Right cardiac atrium (tissue), 5 donors: ENCODE measurements at regions of chr9 and their contacts with region 1.

Region 1: GRCh38 chr9:126490871-126491567 is 122.7 kb upstream of the LMX1B start:
- DNase-seq: peak in 2 of 3 donors; percentile 20 to 30
- ATAC-seq: no peak
- H3K4me3 ChIP-seq: no peak overlapping the region
- H3K27ac ChIP-seq: no peak overlapping the region
- H3K4me1 ChIP-seq: no peaks in the 10 kb centered on the region
- H3K27me3 ChIP-seq: no peaks in the 10 kb centered on the region

Region 2: DNA sequence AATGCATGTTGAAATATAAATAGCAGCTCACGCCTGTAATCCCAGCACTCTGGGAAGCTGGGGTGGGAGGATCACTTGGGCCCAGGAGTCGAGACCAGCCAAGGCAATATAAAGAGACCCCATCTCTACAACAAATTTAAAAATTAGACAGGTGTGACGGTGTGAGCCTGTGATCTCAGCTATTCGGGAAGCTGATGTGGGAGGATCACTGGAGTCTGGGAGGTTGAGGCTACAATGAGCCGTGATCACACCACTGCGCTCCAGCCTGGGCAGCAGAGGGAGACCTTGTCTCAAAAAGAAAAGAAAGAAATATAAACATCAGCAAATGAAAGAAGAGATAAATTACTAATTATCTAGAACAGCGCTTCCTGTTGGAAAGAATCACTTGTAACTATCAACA is 889.1 kb before region 1 on chr9:
- intact Hi-C with region 1: no loop called
- DNase-seq: no peak
- ATAC-seq: no peak
- H3K4me3 ChIP-seq: no peak overlapping the region
- H3K27ac ChIP-seq: no peak overlapping the region
- H3K4me1 ChIP-seq: peaks cover 1% of the 10 kb centered on the region
- H3K27me3 ChIP-seq: no peaks in the 10 kb centered on the region

Region 3: DNA sequence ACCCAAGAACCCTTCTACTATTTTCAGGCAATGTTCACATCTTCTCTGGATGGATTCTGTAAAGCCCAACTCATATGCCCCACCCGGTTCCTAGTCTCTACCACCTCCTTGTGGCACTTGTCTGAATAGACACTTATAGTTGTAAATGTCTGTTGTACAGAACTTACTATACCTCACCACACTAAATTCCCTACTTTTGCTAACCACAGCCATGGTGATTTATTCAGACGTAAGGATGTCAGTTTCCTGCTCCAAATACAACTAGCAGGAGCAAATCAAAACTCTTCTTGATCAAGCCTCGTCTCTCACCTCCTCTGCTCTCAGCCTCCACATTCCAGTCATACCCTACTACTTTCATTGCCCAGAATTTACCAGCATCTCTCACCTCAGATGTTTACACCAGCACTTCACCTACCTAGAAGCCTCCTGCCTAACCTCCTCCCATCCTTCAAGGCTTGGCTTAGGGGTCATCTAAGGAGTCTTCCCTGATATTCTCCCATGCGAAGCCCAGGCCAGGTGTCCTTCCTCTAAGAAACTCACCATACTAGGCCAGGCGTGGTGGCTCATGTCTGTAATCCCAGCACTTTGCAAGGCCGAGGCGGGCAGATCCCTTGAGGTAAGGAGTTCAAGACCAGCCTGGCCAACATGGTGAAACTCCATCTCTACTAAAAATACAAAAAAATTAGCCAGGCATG is 859.5 kb before region 1 on chr9:
- intact Hi-C with region 1: loop called in 1 of 4 experiments (anchors 10 kb)
- DNase-seq: peak in 1 of 3 donors; percentile 51
- ATAC-seq: peak; percentile 66 to 79
- H3K4me3 ChIP-seq: no peak overlapping the region
- H3K27ac ChIP-seq: no peak overlapping the region
- H3K4me1 ChIP-seq: peaks cover 3% of the 10 kb centered on the region
- H3K27me3 ChIP-seq: no peaks in the 10 kb centered on the region

Region 4: GRCh38 chr9:126301985-126302603 is 188.9 kb before region 1 on chr9:
- intact Hi-C with region 1: loop called in 3 of 4 experiments (anchors 5 to 10 kb)
- DNase-seq: peak; percentile 40 to 76 (median 72)
- ATAC-seq: peak; percentile 81 to 83
- H3K4me3 ChIP-seq: no peak overlapping the region
- H3K27ac ChIP-seq: no peak overlapping the region
- H3K4me1 ChIP-seq: no peaks in the 10 kb centered on the region
- H3K27me3 ChIP-seq: no peaks in the 10 kb centered on the region

Region 5: DNA sequence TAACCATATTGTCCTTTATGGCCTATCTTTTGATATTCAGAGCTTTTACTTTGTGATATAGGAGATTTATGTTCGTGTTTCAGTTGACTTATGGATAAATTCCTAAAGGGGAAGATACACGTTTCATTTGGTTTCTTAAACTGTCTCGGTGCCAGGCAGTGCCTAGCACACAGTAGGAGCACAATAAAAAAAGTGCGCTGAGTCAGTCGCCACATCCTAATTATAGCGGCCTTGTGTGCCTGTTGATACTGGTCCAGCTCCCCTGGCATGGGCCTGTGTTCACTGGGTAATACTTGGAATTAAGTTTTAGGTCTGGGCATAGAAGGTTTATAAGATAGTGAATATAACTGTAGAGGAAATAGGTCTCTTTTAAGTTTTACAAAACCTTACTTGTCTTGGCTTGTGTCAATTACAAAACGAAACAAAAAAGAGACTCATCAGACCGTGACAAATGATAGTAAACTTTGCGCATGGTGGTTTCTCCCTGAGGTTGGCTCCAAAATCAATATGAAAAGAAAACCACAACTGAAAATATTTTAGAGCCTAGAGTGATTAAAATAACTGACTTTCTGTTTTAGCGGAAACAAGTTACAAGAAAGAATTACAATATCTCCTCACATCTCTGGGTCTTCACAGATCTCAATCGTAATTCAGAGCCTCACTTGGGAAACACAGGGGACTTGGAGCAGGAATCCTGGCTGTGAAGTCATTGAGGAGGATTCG is 79.6 kb before region 1 on chr9:
- intact Hi-C with region 1: loop called in 1 of 4 experiments (anchors 10 kb)
- DNase-seq: no peak
- ATAC-seq: no peak
- H3K4me3 ChIP-seq: no peak overlapping the region
- H3K27ac ChIP-seq: no peak overlapping the region
- H3K4me1 ChIP-seq: peaks cover 3% of the 10 kb centered on the region
- H3K27me3 ChIP-seq: no peaks in the 10 kb centered on the region